CD14-positive monocyte (primary cell): ENCODE measurements at regions of chr11 and their contacts with region 1.

Region 1: DNA sequence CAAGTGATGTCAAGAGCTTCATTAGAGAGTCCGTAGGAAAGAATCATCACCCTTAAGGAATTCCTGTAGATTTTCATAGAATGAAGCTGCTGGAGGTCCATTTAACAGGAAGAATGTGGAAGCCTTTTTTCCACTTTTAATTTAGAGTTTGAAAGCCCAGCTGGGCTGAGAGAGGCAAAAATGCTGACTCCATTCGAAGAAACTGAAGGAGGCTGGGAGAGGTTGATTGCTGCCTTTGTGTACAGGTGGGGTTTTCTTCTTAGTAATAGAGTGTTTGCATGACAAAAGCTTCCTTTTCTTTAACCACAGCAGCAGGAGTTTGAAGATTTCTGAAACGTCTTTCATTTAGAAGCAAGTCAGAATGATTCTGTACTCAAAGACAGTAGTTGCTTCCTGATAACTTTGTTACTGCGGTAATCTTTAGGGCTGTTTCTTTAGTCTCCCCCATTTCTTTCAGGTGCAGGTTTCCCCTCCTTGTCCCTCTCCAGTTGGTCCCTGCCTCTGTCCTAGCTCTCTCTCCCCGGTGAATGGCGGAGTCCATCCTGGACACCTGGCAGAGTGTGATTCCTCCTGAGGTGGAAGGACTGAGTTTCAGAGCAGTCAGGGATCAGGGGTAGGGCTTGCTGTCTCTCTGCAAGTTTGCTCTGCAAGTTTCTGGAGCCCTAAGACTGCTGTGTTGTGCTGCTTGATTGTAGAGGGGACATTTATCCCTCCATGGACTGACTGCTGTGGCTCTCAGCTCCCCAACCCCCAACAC is 166.2 kb downstream of the LDLRAD3 start:
- DNase-seq: no peak
- H3K4me3 ChIP-seq: no peak overlapping the region
- H3K4me3 Mint-ChIP-seq: no peak overlapping the region
- H3K27ac ChIP-seq: no peak overlapping the region
- H3K27ac Mint-ChIP-seq: no peak overlapping the region
- H3K4me1 ChIP-seq: no peaks in the 10 kb centered on the region
- H3K4me1 Mint-ChIP-seq: peaks cover 2% of the 10 kb centered on the region
- H3K27me3 ChIP-seq: no peaks in the 10 kb centered on the region
- H3K27me3 Mint-ChIP-seq: peaks cover 1 to 3% (median 2%) of the 10 kb centered on the region in 3 donors
- CTCF ChIP-seq: no peak

Region 2: GRCh38 chr11:36009473-36009872 is 100.6 kb before region 1 on chr11:
- intact Hi-C with region 1: no loop called
- DNase-seq: no peak
- H3K4me3 ChIP-seq: no peak overlapping the region
- H3K4me3 Mint-ChIP-seq: no peak overlapping the region
- H3K27ac ChIP-seq: no peak overlapping the region
- H3K27ac Mint-ChIP-seq: no peak overlapping the region
- H3K4me1 ChIP-seq: peaks cover 7% of the 10 kb centered on the region in 2 donors
- H3K4me1 Mint-ChIP-seq: peaks cover 11% of the 10 kb centered on the region
- H3K27me3 ChIP-seq: no peaks in the 10 kb centered on the region
- H3K27me3 Mint-ChIP-seq: peaks cover 0 to 1% (median 0%) of the 10 kb centered on the region in 3 donors
- CTCF ChIP-seq: no peak

Region 3: DNA sequence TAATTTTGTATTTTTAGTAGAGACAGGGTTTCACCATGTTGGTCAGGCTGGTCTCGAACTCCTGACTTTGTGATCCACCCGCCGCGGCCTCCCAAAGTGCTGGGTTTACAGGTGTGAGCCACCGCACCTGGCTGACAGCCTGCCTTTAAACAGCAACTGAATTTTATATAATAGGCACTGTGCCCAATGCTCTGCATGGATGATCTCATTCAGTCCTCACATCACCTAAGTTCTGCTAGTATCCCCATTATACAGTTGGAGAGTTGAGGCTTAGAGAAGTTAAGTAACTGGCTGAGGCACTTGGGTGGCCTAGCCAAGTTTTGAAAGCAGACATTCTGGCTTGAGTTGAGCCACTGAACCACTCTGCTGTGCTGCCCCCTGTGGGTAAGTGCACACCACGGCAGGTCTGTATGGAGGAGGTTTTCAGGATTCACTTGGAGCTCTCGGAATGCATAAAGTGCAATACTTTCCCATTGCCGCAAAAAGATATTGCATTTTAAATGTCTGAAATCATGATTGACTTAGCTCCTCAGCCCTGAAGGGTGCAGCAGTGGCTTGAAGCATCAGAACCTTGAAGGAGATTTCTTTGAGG is 53.8 kb before region 1 on chr11:
- intact Hi-C with region 1: no loop called
- DNase-seq: no peak
- H3K4me3 ChIP-seq: no peak overlapping the region
- H3K4me3 Mint-ChIP-seq: no peak overlapping the region
- H3K27ac ChIP-seq: no peak overlapping the region
- H3K27ac Mint-ChIP-seq: no peak overlapping the region
- H3K4me1 ChIP-seq: peaks cover 3 to 14% of the 10 kb centered on the region in 2 donors
- H3K4me1 Mint-ChIP-seq: peaks cover 19% of the 10 kb centered on the region
- H3K27me3 ChIP-seq: no peaks in the 10 kb centered on the region
- H3K27me3 Mint-ChIP-seq: peaks cover 0 to 2% (median 2%) of the 10 kb centered on the region in 3 donors
- CTCF ChIP-seq: peak; percentile 45

Region 4: DNA sequence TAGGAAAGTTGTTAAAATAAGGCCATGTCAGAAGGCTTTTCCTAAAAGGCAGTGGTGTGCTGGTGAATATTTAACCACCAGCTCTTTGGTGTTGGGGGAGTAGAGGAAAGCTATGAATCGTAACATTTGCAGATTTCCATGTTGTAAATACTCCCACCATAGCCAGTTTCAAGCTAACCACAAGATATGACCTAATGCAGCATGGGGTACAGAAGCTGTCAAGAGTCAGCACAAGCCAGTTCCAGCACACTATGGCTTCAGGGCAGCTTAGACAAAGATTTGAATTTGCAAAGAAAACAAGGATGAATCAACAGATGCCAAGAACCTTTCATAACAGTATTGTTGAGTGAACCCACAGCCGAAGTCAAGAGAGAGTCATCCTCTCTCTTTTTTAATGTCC is 139.2 kb after region 1 on chr11:
- intact Hi-C with region 1: loop called in 1 of 2 experiments (anchors 10 kb)
- DNase-seq: no peak
- H3K4me3 ChIP-seq: no peak overlapping the region
- H3K4me3 Mint-ChIP-seq: no peak overlapping the region
- H3K27ac ChIP-seq: no peak overlapping the region
- H3K27ac Mint-ChIP-seq: no peak overlapping the region
- H3K4me1 ChIP-seq: peaks cover 0 to 6% of the 10 kb centered on the region in 2 donors
- H3K4me1 Mint-ChIP-seq: peaks cover 10% of the 10 kb centered on the region
- H3K27me3 ChIP-seq: peaks cover 9 to 14% of the 10 kb centered on the region in 2 donors
- H3K27me3 Mint-ChIP-seq: peaks cover 7 to 19% (median 11%) of the 10 kb centered on the region in 3 donors
- CTCF ChIP-seq: no peak